ENCODE measurements at regions of chr17 and their contacts with region 1.

Region 1: DNA sequence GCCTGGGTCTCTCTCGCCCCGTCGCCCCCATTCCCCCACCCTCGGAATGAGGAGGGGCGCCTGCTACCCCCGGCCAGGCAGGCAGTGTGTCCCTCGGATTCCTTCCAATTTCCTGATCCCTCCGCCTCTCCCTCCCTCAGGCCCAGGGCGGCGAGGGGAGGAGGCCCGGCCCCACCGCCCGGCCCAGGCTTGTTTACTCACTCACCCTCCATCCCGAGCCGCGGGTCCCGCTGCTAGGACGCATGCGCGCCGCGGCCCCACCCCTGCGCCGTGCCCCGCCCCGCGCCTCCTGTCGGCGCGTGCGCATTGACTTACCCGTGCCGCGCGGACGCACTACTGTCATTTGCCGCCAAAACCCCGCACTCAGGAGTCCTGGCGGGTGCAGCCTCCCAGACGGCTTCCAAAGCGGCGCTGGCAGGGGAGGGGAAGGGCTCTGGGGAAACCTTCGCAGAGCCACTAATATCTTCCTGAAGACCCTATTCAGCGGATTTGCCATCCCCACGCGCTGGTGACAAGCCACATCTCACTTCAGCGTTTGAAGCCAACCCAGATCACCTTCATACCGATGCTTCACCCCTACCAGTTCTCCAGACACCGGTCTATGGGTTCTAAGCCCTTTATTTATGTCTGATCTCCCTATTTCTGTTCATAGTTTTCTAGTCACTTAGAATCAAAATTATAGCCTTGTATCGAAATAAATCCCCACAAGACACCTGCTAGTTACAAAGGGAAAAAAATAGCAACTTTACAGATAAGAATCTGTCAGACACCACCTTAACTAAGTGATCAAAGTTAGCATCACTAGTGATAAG is at the start of gene EZH1:
- DNase-seq: peak; percentile 90 to 96
- ATAC-seq: peak; percentile 97 to 98 (median 98)
- H3K4me3 ChIP-seq: peak within 1 kb of the TSS; percentile 76
- H3K27ac ChIP-seq: peak within 1 kb of the TSS; percentile 88
- H3K4me1 ChIP-seq: peaks cover 17% of the 10 kb centered on the region
- H3K27me3 ChIP-seq: no peaks in the 10 kb centered on the region
- CTCF ChIP-seq: no peak
- total RNA-seq, gene EZH1: 25.7 to 59.1 (median 33.7) TPM

Region 2: DNA sequence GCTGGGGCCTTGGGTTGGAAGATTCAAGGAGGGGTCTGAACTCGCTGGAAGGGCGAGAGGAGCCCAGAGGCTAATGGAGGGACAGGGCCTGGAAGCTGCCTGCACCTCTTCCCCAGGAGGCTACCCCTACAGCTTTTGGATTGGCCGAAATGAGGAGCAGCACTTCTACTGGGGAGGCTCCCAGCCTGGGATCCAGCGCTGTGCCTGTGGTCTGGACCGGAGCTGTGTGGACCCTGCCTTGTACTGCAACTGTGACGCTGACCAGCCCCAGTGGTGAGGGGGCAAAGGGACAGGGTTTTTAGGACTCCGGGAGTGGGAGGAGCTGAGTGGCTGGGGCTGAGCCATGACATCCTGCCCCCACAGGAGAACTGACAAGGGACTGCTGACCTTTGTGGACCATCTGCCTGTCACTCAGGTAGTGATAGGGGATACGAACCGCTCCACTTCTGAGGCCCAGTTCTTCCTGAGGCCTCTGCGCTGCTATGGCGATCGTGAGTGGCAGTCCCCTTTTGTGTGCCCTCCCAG is 53.9 kb before region 1 on chr17:
- intact Hi-C with region 1: loop called in 1 of 2 experiments (anchors 5 kb)
- DNase-seq: peak in 1 of 2 donors; percentile 12
- ATAC-seq: peak in 2 of 4 donors; percentile 6 to 24
- H3K4me3 ChIP-seq: no peak overlapping the region
- H3K27ac ChIP-seq: no peak overlapping the region
- H3K4me1 ChIP-seq: no peaks in the 10 kb centered on the region
- H3K27me3 ChIP-seq: no peaks in the 10 kb centered on the region
- CTCF ChIP-seq: no peak

Region 3: DNA sequence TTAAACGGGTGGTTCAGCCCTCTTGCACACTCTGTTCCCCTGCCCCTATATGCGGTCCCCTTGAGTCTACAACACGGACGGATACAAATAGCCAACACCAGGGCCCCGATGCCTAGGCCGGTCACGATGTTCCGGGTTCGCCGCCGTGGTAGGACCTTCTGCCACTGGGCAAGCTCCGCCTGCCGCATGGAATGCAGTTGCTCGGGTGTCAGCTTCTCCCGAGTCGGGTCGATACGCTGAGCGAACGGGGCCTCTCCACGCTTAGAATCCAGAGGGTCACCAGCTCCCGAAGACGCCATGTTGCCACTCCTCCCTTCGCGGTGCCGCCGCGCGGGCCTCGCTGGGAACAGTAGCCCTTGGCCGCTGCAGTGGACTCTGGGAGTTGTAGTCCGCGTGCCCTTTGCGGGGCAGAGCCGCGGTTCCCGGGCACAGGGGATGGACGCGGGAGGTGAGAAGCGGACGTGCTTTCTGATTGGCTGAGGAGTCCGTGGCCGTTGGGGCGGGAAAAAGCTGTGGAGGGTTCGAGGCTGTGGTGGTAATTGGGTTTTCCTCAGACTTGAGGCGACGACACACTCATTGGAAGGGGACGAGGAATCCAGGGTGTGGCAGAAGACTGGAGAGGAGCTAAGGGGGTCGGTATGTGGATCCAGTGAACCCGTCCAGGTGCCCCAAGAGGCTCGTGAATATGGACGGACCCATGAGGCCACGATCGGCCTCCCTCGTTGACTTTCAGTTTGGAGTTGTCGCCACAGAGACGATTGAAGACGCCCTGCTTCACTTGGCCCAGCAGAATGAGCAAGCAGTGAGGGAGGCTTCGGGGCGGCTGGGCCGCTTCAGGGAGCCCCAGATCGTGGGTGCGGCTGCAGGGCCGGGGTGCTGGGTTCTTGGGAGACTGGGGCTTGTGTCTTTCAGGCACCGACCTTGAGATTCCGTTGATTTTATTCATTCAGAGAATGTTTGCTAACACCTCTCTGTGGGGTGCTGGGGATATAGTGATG is 53.7 kb after region 1 on chr17 and contains the starts of genes CNTD1 and COA3:
- intact Hi-C with region 1: no loop called
- DNase-seq: peak; percentile 91 to 94
- ATAC-seq: peak; percentile 96 to 99 (median 98)
- H3K4me3 ChIP-seq: peak within 1 kb of the TSS; percentile 98
- H3K27ac ChIP-seq: peak within 1 kb of the TSS; percentile 88
- H3K4me1 ChIP-seq: peaks cover 11% of the 10 kb centered on the region
- H3K27me3 ChIP-seq: no peaks in the 10 kb centered on the region
- CTCF ChIP-seq: no peak
- total RNA-seq, gene CNTD1: 0.74 to 1.3 (median 0.79) TPM in 3 of 4 donors, not detected in the other
- total RNA-seq, gene COA3: 69.1 to 85.2 (median 83.9) TPM